Adrenal gland (tissue), 19 donors: ENCODE measurements at regions of chr1 and their contacts with region 1.

Region 1: DNA sequence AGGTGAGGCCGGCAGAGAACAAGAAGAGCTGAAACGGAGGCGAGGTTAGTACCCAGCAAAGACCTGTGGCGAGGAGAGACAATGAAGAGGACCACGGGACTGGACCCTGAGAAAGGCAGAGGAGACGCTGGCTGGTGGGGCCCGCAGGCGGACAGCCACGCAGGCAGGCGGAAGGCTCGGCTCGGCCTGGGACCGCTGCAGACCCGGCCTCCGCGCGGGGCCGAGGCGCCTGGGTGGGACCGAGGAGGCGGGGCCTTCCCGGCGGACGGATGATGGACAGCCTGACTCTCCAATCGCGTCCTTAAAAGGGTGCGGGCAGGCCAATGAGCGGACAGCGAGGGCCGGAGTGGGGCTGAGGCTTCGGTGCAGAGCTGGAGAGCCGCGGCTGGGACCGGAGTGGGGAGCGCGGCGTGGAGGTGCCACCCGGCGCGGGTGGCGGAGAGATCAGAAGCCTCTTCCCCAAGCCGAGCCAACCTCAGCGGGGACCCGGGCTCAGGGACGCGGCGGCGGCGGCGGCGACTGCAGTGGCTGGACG is at the start of gene MPZL1:
- DNase-seq: peak; percentile 95 to 98 (median 96)
- H3K4me3 ChIP-seq: peak within 1 kb of the TSS; percentile 59 to 75 (median 66)
- H3K27ac ChIP-seq: peak within 1 kb of the TSS; percentile 51 to 94 (median 88)
- H3K4me1 ChIP-seq: peaks cover 0 to 46% of the 10 kb centered on the region in 2 donors
- H3K27me3 ChIP-seq: no peaks in the 10 kb centered on the region
- CTCF ChIP-seq: peak in 1 of 6 experiments; percentile 3
- POLR2A ChIP-seq: peak in 1 of 2 donors; percentile 82
- total RNA-seq, gene MPZL1: 32.5 to 101 (median 64.1) TPM

Region 2: GRCh38 chr1:167538656-167539055 is 183.0 kb before region 1 on chr1:
- intact Hi-C with region 1: no loop called
- DNase-seq: no peak
- H3K4me3 ChIP-seq: no peak overlapping the region
- H3K27ac ChIP-seq: no peak overlapping the region
- H3K4me1 ChIP-seq: no peaks in the 10 kb centered on the region
- H3K27me3 ChIP-seq: no peaks in the 10 kb centered on the region
- CTCF ChIP-seq: no peak
- POLR2A ChIP-seq: no peak

Region 3: GRCh38 chr1:167663002-167663772 is 58.5 kb before region 1 on chr1:
- intact Hi-C with region 1: no loop called
- DNase-seq: peak; percentile 49 to 83 (median 70)
- H3K4me3 ChIP-seq: no peak overlapping the region
- H3K27ac ChIP-seq: peak overlapping the region in 4 of 5 donors; percentile 5 to 73 (median 33)
- H3K4me1 ChIP-seq: peaks cover 24 to 44% of the 10 kb centered on the region in 2 donors
- H3K27me3 ChIP-seq: no peaks in the 10 kb centered on the region
- CTCF ChIP-seq: no peak
- POLR2A ChIP-seq: peak in 1 of 2 donors; percentile 26

Region 4: DNA sequence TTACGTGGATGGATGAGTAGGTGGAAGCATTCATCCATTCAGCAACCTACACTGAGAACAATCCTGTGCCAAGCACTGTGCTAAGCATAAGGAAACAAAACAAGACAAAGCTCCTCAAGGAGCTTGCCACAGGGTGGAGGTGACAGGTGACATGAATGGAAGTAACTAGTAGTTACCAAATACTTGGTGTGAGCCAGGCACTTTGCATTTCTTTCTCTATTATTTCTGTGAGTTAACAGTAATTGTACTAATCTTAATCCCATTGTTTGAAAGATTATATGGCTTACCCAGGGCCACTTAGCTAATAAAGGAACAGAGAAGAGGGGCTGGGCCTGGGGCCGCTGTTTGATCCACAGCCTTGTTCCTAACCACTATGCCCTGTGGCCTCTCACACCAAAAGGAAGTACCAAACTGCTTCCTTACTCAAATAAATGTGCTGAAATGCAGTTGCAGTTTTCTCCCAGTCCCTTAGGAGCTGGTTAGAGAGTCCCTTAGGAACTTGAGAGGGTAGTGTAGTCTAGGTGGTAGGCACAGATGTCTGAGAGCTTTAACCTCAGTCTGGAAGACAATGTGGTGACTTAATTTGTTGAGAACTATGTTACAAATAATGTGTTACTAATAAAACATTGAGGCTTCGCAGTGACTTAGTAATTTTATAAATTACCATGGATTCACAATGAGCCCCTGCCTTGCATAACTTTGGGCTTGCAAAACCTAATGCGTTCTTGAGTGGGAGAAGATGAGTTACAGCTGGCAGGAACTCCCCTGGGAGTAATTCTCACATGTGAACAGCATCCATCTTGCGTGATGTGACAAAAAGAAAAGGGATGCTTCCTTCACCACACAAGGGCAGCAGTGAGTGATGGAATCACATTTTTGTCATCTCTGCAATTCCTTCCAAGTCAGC is 69.8 kb after region 1 on chr1:
- intact Hi-C with region 1: loop called in 1 of 2 experiments (anchors 5 kb)
- DNase-seq: peak in 6 of 7 donors; percentile 32 to 81 (median 44)
- H3K4me3 ChIP-seq: no peak overlapping the region
- H3K27ac ChIP-seq: peak overlapping the region in 2 of 5 donors; percentile 45 to 72
- H3K4me1 ChIP-seq: peaks cover 8 to 9% of the 10 kb centered on the region in 2 donors
- H3K27me3 ChIP-seq: no peaks in the 10 kb centered on the region
- CTCF ChIP-seq: no peak
- POLR2A ChIP-seq: no peak

Region 5: GRCh38 chr1:167803358-167804207 is 81.9 kb after region 1 on chr1:
- intact Hi-C with region 1: loop called in 1 of 2 experiments (anchors 5 kb)
- DNase-seq: peak; percentile 91 to 97 (median 96)
- H3K4me3 ChIP-seq: no peak overlapping the region
- H3K27ac ChIP-seq: no peak overlapping the region
- H3K4me1 ChIP-seq: peaks cover 0 to 7% of the 10 kb centered on the region in 2 donors
- H3K27me3 ChIP-seq: no peaks in the 10 kb centered on the region
- CTCF ChIP-seq: peak; percentile 91 to 97 (median 96)
- POLR2A ChIP-seq: peak in 1 of 2 donors; percentile 14